Naive thymus-derived CD8-positive, alpha-beta T cell (primary cell): ENCODE measurements at regions of chr16 and their contacts with region 1.

Region 1: DNA sequence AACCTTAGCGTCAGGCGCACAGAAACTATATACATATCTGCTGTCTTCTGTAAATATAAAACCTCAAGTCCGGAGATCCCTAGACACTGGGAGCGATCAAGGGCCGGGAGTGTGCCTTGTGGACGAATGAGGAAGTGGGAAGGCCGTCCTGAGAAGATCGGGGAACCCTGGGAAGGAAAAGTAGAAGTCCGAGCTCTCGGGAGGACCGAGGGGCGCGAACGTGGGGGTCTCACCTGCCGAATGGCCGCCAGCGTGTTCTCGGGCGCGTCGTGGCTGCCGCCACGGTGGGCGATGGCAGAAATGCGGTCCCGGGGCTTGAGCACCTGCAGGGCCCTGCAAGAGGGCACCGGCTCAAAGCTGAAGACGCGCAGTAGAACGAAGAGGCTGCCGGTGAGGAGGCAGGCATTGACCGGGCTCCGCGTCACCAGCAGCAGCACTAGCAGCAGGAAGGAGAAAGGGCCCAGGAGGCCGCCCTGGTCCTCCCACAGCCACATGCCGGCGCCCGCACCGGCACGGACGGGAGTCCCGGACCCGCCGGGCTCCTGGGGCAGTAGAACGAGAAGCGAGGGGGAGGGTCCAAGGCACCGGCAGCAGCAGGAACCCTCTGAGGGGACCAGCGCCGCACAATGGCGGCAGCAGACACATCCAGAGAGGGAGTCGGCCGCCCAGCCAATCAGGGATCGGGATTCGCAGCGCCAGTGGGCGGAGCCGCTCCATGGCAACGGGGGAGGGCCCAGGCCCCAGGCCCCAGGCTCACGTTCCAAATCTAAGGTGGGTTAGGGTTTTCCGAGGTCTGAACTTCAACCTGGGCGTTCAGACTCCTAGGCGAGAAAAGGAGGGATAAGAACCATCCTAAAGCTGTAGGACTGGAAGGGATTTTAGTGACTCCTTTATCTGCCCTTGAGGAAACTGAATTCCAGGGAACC is at the start of gene GDE1:
- DNase-seq: peak; percentile 85 to 94 (median 90)
- ATAC-seq: peak; percentile 78 to 80
- H3K4me3 Mint-ChIP-seq: peak within 1 kb of the TSS; percentile 93 to 100 (median 96)
- H3K27ac Mint-ChIP-seq: peak within 1 kb of the TSS; percentile 89 to 97 (median 94)
- H3K4me1 Mint-ChIP-seq: peaks cover 37 to 73% (median 66%) of the 10 kb centered on the region in 4 donors
- H3K27me3 Mint-ChIP-seq: no peaks in the 10 kb centered on the region
- polyA plus RNA-seq, gene GDE1: 25.4 to 27.4 (median 27.0) TPM

Region 2: GRCh38 chr16:19502395-19503131 is 19.2 kb before region 1 on chr16:
- POLR2A ChIA-PET with region 1: no interaction called
- DNase-seq: peak; percentile 18 to 74 (median 48)
- ATAC-seq: peak; percentile 60 to 65
- H3K4me3 Mint-ChIP-seq: no peak overlapping the region
- H3K27ac Mint-ChIP-seq: peak overlapping the region in 1 of 10 donors; percentile 67
- H3K4me1 Mint-ChIP-seq: no peaks in the 10 kb centered on the region
- H3K27me3 Mint-ChIP-seq: no peaks in the 10 kb centered on the region

Region 3: DNA sequence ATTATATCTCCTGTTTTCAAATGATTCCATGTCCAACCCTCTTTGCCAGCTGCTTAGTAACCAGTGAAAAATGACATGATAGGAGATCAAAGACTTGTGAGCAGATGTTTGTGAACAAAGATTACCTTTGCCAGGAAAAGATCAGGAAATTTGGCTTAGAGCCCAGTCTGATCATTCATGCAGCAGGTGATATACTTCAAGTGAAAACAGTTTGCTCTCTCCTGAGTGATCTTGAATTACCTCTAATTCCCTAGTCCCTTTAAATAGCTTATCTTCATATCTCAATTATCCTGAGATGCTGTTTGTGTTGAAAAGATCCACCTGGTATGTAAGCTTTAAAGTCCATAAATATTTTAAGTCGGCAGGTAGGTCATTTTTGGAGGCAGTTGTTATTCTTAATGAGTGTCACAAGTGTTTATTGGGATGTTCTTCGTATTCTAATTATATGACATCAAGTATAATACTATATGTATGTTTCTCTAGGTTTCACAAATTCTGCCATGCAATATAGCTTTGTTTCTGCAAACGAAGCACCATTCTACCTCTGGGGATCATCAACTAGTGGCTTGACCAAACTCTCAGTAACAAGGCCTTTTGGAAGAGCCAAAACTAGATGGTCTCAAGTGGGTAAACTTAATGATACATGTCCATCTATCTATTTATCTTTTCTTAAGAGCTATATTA is 20.5 kb after region 1 on chr16:
- POLR2A ChIA-PET with region 1: interaction called, 10 read pairs
- DNase-seq: no peak
- ATAC-seq: no peak
- H3K4me3 Mint-ChIP-seq: no peak overlapping the region
- H3K27ac Mint-ChIP-seq: peak overlapping the region in 1 of 10 donors; percentile 41
- H3K4me1 Mint-ChIP-seq: no peaks in the 10 kb centered on the region
- H3K27me3 Mint-ChIP-seq: no peaks in the 10 kb centered on the region

Region 4: DNA sequence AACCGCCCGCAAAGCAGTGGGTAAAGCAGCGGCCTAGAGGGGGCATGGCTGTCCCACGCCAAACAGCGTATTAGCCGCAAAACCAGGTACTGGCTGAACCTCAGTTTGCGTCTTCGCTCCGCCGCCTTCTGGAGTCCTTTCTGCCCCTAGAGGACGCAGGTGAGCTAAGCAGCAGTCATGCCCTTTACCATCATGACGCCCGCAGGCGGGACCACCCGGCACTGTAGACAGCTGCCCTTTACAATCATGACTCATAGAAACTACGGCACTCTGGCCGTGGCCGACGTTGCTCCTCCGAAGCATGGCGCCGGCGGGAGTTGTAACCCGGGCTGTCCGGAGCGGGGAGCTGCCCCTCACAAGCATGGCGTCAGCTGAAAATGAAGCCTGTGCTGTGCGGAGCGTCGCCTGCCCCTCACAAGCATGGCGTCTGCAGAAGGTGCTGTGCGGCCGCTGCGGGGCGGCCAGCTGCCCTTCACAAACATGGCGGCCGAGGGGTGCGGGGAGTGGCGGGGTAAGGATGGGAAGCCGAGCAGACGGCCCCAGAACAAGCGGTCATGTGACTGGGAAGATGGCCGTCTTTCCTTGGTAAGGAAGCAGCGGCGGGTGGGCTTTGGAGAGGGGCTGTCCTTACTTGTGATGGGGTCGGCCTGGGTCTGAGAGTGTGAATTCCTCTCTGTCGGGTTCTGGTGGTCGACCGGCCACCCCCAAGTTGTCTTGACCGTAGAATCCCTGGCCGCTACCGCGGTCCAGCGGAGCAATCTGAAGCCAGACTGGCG is 33.6 kb after region 1 on chr16 and contains the start of gene VPS35L:
- POLR2A ChIA-PET with region 1: interaction called, 33 read pairs
- DNase-seq: peak; percentile 90 to 98 (median 96)
- ATAC-seq: peak; percentile 93 to 94
- H3K4me3 Mint-ChIP-seq: peak within 1 kb of the TSS; percentile 91 to 99 (median 96)
- H3K27ac Mint-ChIP-seq: peak within 1 kb of the TSS; percentile 85 to 98 (median 96)
- H3K4me1 Mint-ChIP-seq: peaks cover 7 to 35% (median 18%) of the 10 kb centered on the region in 4 donors
- H3K27me3 Mint-ChIP-seq: no peaks in the 10 kb centered on the region
- polyA plus RNA-seq, gene VPS35L: 41.6 to 53.7 (median 44.6) TPM

Region 5: GRCh38 chr16:19573997-19574396 is 52.3 kb after region 1 on chr16:
- POLR2A ChIA-PET with region 1: no interaction called
- DNase-seq: no peak
- ATAC-seq: no peak
- H3K4me3 Mint-ChIP-seq: no peak overlapping the region
- H3K27ac Mint-ChIP-seq: no peak overlapping the region
- H3K4me1 Mint-ChIP-seq: peaks cover 0 to 2% (median 0%) of the 10 kb centered on the region in 4 donors
- H3K27me3 Mint-ChIP-seq: no peaks in the 10 kb centered on the region